Aorta (tissue), 5 donors: ENCODE measurements at regions of chr4 and their contacts with region 1.

Region 1: DNA sequence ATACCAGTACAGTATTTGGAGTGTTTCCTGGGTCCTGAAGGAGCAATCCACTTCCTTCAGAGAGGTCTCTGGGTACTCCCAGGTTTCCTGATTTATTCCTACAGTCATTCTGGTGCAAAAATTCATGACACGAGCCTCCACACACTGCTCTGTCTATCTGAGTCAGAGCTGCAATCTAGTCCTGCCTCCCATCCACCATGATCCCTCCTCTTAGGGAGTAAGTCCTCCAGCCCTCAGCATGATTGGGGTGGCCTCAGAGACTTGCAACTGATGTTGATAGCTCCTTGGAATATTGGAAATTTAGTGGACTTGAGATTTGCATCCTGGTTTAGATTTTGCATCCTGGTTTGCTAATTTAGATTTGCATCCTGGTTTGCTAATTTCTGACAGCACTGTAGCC is 20.5 kb downstream of the CNGA1 start:
- DNase-seq: no peak
- ATAC-seq: no peak
- H3K4me3 ChIP-seq: no peak overlapping the region
- H3K27ac ChIP-seq: no peak overlapping the region
- H3K4me1 ChIP-seq: no peaks in the 10 kb centered on the region
- H3K27me3 ChIP-seq: no peaks in the 10 kb centered on the region

Region 2: GRCh38 chr4:47836641-47837093 is 159.4 kb before region 1 on chr4:
- intact Hi-C with region 1: no loop called
- DNase-seq: peak; percentile 79 to 86
- ATAC-seq: peak; percentile 89
- H3K4me3 ChIP-seq: peak overlapping the region; percentile 27 to 42
- H3K27ac ChIP-seq: no peak overlapping the region
- H3K4me1 ChIP-seq: peaks cover 0 to 3% of the 10 kb centered on the region in 2 donors
- H3K27me3 ChIP-seq: no peaks in the 10 kb centered on the region

Region 3: GRCh38 chr4:48138936-48139335 is 142.9 kb after region 1 on chr4:
- intact Hi-C with region 1: loop called in 1 of 2 experiments (anchors 5 kb)
- DNase-seq: no peak
- ATAC-seq: no peak
- H3K4me3 ChIP-seq: no peak overlapping the region
- H3K27ac ChIP-seq: no peak overlapping the region
- H3K4me1 ChIP-seq: peaks cover 0 to 4% of the 10 kb centered on the region in 2 donors
- H3K27me3 ChIP-seq: no peaks in the 10 kb centered on the region